ENCODE measurements at regions of chr1 and their contacts with region 1.

Region 1: DNA sequence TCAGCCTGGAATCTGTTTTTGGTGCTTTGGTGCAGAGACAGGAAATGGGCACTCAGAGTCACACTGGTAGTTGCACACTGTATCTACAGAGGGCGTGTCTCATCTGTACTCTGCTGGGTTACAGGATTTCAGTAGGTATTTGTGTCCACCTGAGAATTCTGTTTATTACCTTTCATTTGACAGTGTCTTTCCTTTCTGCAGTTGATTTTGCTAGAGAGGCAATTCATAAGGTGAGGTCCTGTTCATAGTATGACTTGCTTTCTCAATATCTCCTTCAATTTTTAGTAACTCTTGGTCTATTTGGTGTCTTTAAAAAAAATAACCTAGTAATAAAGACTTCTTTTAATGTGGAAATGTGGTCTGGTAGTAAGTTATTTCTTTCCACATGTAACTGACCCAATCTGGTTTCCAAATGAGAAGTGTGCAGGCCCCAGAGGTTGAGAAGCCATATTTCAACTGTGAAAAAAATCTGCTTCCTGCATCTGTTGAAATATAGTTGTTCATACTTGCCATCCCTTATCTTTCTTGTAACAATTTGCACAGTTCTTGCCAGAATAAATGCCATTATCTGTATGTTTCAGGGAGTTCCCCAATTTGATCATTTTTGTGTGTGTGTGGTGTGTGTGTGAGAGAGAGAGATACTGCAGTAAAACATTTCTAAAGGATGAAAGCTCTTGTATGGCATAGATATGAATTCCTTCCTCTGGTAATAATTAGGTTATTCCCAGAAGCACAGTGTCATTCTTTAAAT is 78.4 kb upstream of the DNAJC6 start:
- DNase-seq: no peak
- H3K4me3 Mint-ChIP-seq: no peak overlapping the region
- H3K27ac Mint-ChIP-seq: peak overlapping the region; percentile 81
- H3K4me1 Mint-ChIP-seq: peaks cover 32% of the 10 kb centered on the region
- H3K27me3 Mint-ChIP-seq: no peaks in the 10 kb centered on the region

Region 2: DNA sequence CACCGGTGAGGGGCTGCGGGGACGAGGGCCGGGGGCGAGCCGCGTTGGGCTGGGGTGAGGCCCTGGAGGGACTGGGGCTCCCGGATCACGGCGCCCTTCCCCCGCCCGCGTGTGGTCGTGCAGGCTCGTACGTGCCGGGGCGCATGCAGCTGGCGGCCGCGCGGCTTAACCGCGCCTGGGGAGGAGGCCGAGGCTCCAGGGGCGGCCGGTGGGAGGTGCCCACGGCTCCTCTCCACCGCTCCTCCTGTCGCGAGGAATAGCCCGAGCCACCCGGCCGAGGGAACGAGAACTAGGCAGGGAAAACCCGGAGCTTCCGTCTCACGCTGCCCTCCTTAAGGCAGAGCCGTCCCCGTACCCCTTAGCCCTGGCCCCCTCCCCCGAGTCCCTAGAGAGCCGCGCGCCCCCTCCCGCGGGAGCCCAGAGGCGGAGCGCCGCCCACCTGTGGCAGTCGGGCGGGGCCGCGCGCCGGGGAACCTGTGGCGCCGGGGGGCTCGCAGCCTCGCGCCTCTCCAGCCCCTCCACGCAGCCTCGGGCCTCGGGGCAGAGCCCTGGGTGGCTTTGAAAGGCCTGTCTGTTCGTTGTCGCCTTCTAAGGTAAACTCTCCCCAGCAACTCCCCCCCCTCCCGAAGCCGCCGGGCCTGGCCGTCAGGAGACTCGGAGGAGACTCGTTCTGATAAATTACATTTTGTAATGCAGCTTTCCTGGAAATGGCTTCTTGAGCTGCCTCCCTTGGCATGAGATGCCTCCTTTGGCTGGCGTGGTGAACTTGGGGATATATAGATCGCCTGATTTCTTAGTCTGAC is 82.2 kb before region 1 on chr1:
- intact Hi-C with region 1: loop called (anchors 1 kb)
- DNase-seq: peak; percentile 55
- H3K4me3 Mint-ChIP-seq: peak overlapping the region; percentile 94
- H3K27ac Mint-ChIP-seq: peak overlapping the region; percentile 90
- H3K4me1 Mint-ChIP-seq: peaks cover 52% of the 10 kb centered on the region
- H3K27me3 Mint-ChIP-seq: peaks cover 7% of the 10 kb centered on the region

Region 3: GRCh38 chr1:65174585-65174984 is 56.3 kb before region 1 on chr1:
- intact Hi-C with region 1: no loop called
- DNase-seq: no peak
- H3K4me3 Mint-ChIP-seq: no peak overlapping the region
- H3K27ac Mint-ChIP-seq: no peak overlapping the region
- H3K4me1 Mint-ChIP-seq: peaks cover 33% of the 10 kb centered on the region
- H3K27me3 Mint-ChIP-seq: no peaks in the 10 kb centered on the region